CD4-positive, alpha-beta memory T cell (primary cell): ENCODE measurements at regions of chr17 and their contacts with region 1.

Region 1: GRCh38 chr17:1267471-1267947 is 2.7 kb upstream of the BHLHA9 start:
- DNase-seq: peak in 1 of 5 donors; percentile 12
- H3K4me3 ChIP-seq: peak overlapping the region in 1 of 2 donors; percentile 52
- H3K4me3 Mint-ChIP-seq: peak overlapping the region; percentile 73 to 85 (median 79)
- H3K27ac ChIP-seq: no peak overlapping the region
- H3K27ac Mint-ChIP-seq: peak overlapping the region; percentile 34 to 82 (median 70)
- H3K4me1 ChIP-seq: peaks cover 8% of the 10 kb centered on the region
- H3K4me1 Mint-ChIP-seq: peaks cover 0 to 15% (median 4%) of the 10 kb centered on the region in 4 donors
- H3K27me3 ChIP-seq: no peaks in the 10 kb centered on the region
- H3K27me3 Mint-ChIP-seq: peaks cover 3 to 11% of the 10 kb centered on the region in 2 donors

Region 2: DNA sequence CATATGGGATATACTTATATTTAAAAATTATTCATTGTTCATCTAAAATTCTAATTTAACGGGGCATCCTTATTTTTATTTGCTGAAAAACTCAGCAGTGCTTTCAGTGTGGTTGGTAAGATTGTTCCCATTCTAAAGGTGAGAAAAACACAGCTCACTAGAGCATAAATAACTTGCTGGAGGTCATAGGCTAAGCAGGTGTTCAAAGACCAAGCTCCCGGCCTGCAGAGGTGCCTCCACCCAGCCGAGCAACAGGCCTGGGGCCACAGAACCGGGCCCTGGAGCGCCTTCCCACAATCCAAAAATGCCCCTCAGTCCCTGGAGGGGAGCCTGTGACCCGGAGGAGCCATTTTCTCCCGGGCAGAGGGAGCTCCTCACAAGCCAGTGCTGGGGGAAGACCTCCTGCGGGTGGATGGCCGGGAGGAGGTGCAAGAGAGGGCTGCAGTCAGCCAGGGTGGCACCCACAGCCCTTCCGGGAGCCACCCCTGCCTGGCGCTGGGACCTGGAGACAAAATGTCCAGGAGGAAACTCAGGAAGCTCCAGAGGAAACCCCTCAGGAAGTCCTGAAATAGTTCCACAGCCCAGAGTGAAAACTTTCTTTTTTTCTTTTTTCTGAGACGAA is 102.5 kb before region 1 on chr17:
- CTCF ChIA-PET with region 1: no interaction called
- POLR2A ChIA-PET with region 1: no interaction called
- intact Hi-C with region 1: no loop called
- DNase-seq: no peak
- H3K4me3 ChIP-seq: no peak overlapping the region
- H3K4me3 Mint-ChIP-seq: no peak overlapping the region
- H3K27ac ChIP-seq: no peak overlapping the region
- H3K27ac Mint-ChIP-seq: no peak overlapping the region
- H3K4me1 ChIP-seq: no peaks in the 10 kb centered on the region
- H3K4me1 Mint-ChIP-seq: peaks cover 0 to 1% (median 0%) of the 10 kb centered on the region in 4 donors
- H3K27me3 ChIP-seq: no peaks in the 10 kb centered on the region
- H3K27me3 Mint-ChIP-seq: no peaks in the 10 kb centered on the region

Region 3: DNA sequence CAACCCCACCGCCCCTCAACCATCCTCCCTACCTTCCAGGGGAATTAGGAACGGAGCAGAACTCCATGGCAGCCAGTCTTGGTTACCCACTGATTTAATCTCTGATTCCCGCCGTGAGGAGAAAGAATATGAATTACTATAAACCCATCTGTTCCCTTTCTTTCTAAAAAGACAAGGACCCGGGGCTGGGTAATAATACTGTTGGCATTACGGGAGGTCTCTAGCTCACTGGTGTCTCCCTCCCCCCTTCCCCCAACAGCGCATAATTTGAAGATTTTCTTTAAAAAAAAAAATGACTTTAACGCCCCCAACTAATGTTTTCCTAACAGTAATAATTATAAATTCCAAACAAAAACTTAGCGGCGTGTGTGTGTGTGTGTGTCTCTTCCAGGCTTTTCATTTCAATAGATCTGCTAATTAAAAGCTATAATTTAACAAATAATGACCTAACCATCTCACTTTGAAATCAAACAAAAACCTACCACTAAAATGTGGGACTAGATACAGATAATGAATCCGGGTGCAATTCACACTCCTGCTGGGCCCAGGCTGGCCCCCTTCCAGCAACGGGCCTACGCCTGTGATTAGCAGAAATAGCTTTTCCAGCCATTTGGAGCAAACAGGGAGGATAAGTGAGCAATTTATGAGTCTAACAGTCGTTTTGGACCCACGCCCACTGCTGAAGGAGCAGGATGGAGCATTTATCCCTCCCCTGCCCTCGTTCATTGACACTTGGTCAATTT is 15.5 kb before region 1 on chr17:
- CTCF ChIA-PET with region 1: interaction called, 4 read pairs
- POLR2A ChIA-PET with region 1: no interaction called
- intact Hi-C with region 1: loop called (anchors 1 kb)
- DNase-seq: no peak
- H3K4me3 ChIP-seq: no peak overlapping the region
- H3K4me3 Mint-ChIP-seq: no peak overlapping the region
- H3K27ac ChIP-seq: no peak overlapping the region
- H3K27ac Mint-ChIP-seq: peak overlapping the region in 1 of 7 donors; percentile 19
- H3K4me1 ChIP-seq: peaks cover 12% of the 10 kb centered on the region
- H3K4me1 Mint-ChIP-seq: peaks cover 0 to 18% (median 8%) of the 10 kb centered on the region in 4 donors
- H3K27me3 ChIP-seq: no peaks in the 10 kb centered on the region
- H3K27me3 Mint-ChIP-seq: peaks cover 3 to 5% of the 10 kb centered on the region in 2 donors

Region 4: GRCh38 chr17:1294157-1294717 is 26.7 kb after region 1 on chr17:
- CTCF ChIA-PET with region 1: no interaction called
- POLR2A ChIA-PET with region 1: no interaction called
- intact Hi-C with region 1: loop called (anchors 1 kb)
- DNase-seq: peak; percentile 93 to 97 (median 95)
- H3K4me3 ChIP-seq: peak overlapping the region in 1 of 2 donors; percentile 0
- H3K4me3 Mint-ChIP-seq: peak overlapping the region; percentile 62 to 86 (median 70)
- H3K27ac ChIP-seq: peak overlapping the region; percentile 45
- H3K27ac Mint-ChIP-seq: peak overlapping the region; percentile 85 to 96 (median 93)
- H3K4me1 ChIP-seq: peaks cover 61% of the 10 kb centered on the region
- H3K4me1 Mint-ChIP-seq: peaks cover 28 to 75% (median 51%) of the 10 kb centered on the region in 4 donors
- H3K27me3 ChIP-seq: no peaks in the 10 kb centered on the region
- H3K27me3 Mint-ChIP-seq: no peaks in the 10 kb centered on the region

Region 5: GRCh38 chr17:1455291-1455796 is 187.8 kb after region 1 on chr17:
- CTCF ChIA-PET with region 1: no interaction called
- POLR2A ChIA-PET with region 1: no interaction called
- intact Hi-C with region 1: no loop called
- DNase-seq: peak; percentile 18 to 60 (median 28)
- H3K4me3 ChIP-seq: peak overlapping the region; percentile 81 to 92
- H3K4me3 Mint-ChIP-seq: peak overlapping the region; percentile 88 to 96 (median 93)
- H3K27ac ChIP-seq: peak overlapping the region; percentile 94
- H3K27ac Mint-ChIP-seq: peak overlapping the region; percentile 80 to 96 (median 95)
- H3K4me1 ChIP-seq: peaks cover 39% of the 10 kb centered on the region
- H3K4me1 Mint-ChIP-seq: peaks cover 27 to 64% (median 44%) of the 10 kb centered on the region in 4 donors
- H3K27me3 ChIP-seq: no peaks in the 10 kb centered on the region
- H3K27me3 Mint-ChIP-seq: peaks cover 0 to 2% of the 10 kb centered on the region in 2 donors